Heart left ventricle (tissue), 16 donors: ENCODE measurements at regions of chr10 and their contacts with region 1.

Region 1: GRCh38 chr10:47339759-47340607 is 8.2 kb upstream of the RBP3 start:
- DNase-seq: no peak
- ATAC-seq: no peak
- H3K4me3 ChIP-seq: no peak overlapping the region
- H3K27ac ChIP-seq: no peak overlapping the region
- H3K4me1 ChIP-seq: no peaks in the 10 kb centered on the region
- H3K27me3 ChIP-seq: peaks cover 0 to 3% (median 0%) of the 10 kb centered on the region in 9 donors
- CTCF ChIP-seq: no peak
- POLR2A ChIP-seq: no peak

Region 2: GRCh38 chr10:47287365-47287802 is 52.6 kb before region 1 on chr10:
- intact Hi-C with region 1: loop called in 1 of 10 experiments (anchors 5 kb)
- DNase-seq: peak in 4 of 5 donors; percentile 51 to 87 (median 59)
- ATAC-seq: peak; percentile 83 to 89 (median 85)
- H3K4me3 ChIP-seq: no peak overlapping the region
- H3K27ac ChIP-seq: peak overlapping the region in 4 of 12 donors; percentile 34 to 67 (median 43)
- H3K4me1 ChIP-seq: peaks cover 0 to 10% (median 3%) of the 10 kb centered on the region in 12 donors
- H3K27me3 ChIP-seq: no peaks in the 10 kb centered on the region
- CTCF ChIP-seq: no peak
- POLR2A ChIP-seq: no peak